Endothelial cell of umbilical vein (primary cell): ENCODE measurements at regions of chr12 and their contacts with region 1.

Region 1: DNA sequence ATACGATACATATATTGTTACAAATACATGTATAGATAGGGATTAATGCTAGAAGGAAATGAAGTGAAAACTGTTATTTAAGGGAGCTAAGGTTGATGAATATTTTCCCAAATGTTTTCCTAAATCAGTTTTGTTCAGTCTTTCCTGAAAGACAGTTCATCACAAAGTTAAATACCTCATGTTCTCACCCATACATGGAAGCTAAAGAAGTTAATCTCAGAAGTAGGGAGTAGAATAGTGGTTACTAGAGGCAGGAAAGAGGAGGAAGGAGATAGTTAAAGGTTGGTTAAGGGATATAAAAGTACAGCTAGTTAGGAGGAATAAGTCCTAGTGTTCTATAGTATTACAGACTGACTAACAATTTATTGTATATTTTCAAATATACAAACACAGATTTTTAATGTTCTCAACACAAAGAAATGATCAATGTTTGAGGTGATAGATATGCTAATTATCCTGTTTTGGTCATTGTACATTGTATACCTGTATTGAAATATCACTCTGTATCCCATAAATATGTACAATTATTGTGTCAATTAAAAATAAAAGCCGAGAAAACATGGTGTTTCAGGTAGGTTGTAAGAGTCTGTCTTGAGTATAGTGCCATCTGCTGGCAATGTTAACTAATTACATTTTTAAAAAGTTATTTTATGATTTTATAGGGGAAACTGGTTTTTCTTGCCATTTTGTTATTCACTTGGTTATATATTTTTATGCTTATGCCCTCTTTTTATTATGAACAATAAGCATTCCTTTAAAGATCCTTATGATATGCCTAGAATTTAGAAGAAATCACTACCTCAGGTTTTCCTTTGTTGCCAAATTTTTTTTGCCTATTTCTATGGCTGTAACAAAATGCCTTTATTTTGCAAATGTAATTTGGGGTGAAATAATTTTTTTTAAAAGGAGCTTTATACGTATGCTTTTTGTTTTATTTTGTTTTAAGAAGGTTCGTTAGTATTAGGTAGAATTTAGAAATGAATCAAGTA is 26.9 kb downstream of the ZDHHC17 start:
- DNase-seq: peak; percentile 46
- H3K4me3 ChIP-seq: no peak overlapping the region
- H3K27ac ChIP-seq: no peak overlapping the region
- H3K4me1 ChIP-seq: no peaks in the 10 kb centered on the region
- H3K27me3 ChIP-seq: no peaks in the 10 kb centered on the region
- CTCF ChIP-seq: peak; percentile 16 to 17
- POLR2A ChIP-seq: no peak

Region 2: GRCh38 chr12:76391461-76391860 is 399.4 kb before region 1 on chr12:
- CTCF ChIA-PET with region 1: no interaction called
- POLR2A ChIA-PET with region 1: no interaction called
- dilution Hi-C with region 1: no loop called
- intact Hi-C with region 1: no loop called
- DNase-seq: no peak
- H3K4me3 ChIP-seq: no peak overlapping the region
- H3K27ac ChIP-seq: no peak overlapping the region
- H3K4me1 ChIP-seq: no peaks in the 10 kb centered on the region
- H3K27me3 ChIP-seq: no peaks in the 10 kb centered on the region
- CTCF ChIP-seq: no peak
- POLR2A ChIP-seq: no peak

Region 3: DNA sequence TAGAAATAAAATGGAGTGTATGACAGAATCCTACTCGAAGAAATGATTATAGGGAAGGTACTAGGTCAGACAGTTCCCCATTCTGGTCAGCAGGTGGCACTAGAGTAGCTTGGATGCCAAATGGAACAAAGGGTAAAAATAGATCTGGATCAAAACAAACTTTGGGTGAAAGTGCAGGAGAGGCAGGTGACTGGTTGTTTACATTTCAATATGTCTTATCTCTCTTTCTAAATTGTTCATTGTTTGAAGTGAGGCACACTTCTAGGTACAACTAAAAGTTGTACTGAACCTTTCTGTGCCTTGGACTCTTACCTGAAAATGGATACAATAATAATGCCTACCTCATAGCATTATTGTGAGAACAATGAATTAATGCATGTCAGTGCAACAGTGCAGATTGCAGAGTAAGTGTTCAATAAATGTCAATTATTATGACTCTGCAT is 169.3 kb before region 1 on chr12:
- CTCF ChIA-PET with region 1: interaction called, 67 read pairs
- POLR2A ChIA-PET with region 1: no interaction called
- dilution Hi-C with region 1: no loop called
- intact Hi-C with region 1: loop called (anchors 1 kb)
- DNase-seq: peak; percentile 75
- H3K4me3 ChIP-seq: no peak overlapping the region
- H3K27ac ChIP-seq: no peak overlapping the region
- H3K4me1 ChIP-seq: peaks cover 2% of the 10 kb centered on the region
- H3K27me3 ChIP-seq: peaks cover 0 to 2% of the 10 kb centered on the region in 2 experiments
- CTCF ChIP-seq: peak; percentile 72 to 77
- POLR2A ChIP-seq: no peak

Region 4: GRCh38 chr12:76688631-76689030 is 102.2 kb before region 1 on chr12:
- CTCF ChIA-PET with region 1: interaction called, 3 read pairs
- POLR2A ChIA-PET with region 1: no interaction called
- dilution Hi-C with region 1: no loop called
- intact Hi-C with region 1: loop called (anchors 2 kb)
- DNase-seq: no peak
- H3K4me3 ChIP-seq: no peak overlapping the region
- H3K27ac ChIP-seq: no peak overlapping the region
- H3K4me1 ChIP-seq: peaks cover 9% of the 10 kb centered on the region
- H3K27me3 ChIP-seq: no peaks in the 10 kb centered on the region
- CTCF ChIP-seq: peak; percentile 8 to 13
- POLR2A ChIP-seq: no peak

Region 5: GRCh38 chr12:76804435-76804976 is 13.6 kb after region 1 on chr12:
- CTCF ChIA-PET with region 1: no interaction called
- POLR2A ChIA-PET with region 1: no interaction called
- dilution Hi-C with region 1: no loop called
- intact Hi-C with region 1: no loop called
- DNase-seq: no peak
- H3K4me3 ChIP-seq: no peak overlapping the region
- H3K27ac ChIP-seq: no peak overlapping the region
- H3K4me1 ChIP-seq: no peaks in the 10 kb centered on the region
- H3K27me3 ChIP-seq: no peaks in the 10 kb centered on the region
- CTCF ChIP-seq: no peak
- POLR2A ChIP-seq: no peak